Activated T-helper 1 cell treated with anti-CD3 and anti-CD28 coated beads, Interleukin-12 subunit alpha, Interleukin-12 subunit beta, Interleukin-2, Interleukin-4 antibody, amounts not matched to agents 30 ng/mL and 10 ng/mL and 1 ng/mL, durations not matched to agents 14 hours and 24 hours and 36 hours (primary cell): ENCODE measurements at regions of chr17 and their contacts with region 1.

Region 1: DNA sequence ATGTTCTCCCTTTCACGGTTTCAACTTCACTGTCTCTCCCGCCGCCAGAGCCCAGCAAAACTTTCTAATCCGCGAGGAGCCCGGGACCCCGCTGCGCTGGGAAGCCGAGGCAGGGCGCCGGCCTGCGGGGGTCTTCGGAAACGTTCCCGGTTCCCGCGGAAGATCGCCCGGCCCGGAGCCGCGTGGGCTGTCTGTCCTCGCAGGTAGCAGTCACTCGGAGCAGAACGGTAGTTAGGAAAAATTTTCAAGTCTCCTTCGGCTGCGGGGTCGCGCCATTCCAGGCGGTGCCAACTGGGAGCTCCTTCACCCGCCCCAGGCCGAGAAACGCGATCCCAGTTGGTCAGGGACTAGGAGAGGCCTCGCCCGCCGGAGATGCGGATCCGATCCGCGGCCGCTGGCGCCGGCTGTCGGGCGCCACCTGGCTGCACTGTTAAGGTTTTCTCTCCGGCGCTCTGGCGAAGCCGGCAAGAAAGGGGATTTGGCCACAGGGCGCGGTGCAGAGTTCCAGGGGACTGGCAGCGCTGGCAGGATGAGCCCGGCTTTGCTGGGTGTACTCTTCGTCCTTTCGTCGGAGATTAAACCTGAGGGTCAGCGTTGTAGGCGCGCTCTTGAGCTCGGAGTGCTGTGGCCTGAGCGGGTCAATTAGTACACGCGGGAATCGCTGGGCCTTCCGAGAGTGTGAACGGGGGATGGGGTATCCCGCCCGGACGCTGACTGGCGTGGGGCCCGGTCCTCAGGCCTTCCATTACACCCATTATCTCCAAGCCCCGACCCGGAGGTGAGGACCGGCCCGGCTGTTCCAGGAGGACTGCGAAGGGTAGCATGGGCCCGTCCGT is 135.4 kb downstream of the KCNJ12 start:
- DNase-seq: peak; percentile 37
- H3K4me3 Mint-ChIP-seq: peak overlapping the region; percentile 70
- H3K27ac Mint-ChIP-seq: no peak overlapping the region
- H3K4me1 Mint-ChIP-seq: peaks cover 18% of the 10 kb centered on the region
- H3K27me3 Mint-ChIP-seq: peaks cover 66% of the 10 kb centered on the region

Region 2: DNA sequence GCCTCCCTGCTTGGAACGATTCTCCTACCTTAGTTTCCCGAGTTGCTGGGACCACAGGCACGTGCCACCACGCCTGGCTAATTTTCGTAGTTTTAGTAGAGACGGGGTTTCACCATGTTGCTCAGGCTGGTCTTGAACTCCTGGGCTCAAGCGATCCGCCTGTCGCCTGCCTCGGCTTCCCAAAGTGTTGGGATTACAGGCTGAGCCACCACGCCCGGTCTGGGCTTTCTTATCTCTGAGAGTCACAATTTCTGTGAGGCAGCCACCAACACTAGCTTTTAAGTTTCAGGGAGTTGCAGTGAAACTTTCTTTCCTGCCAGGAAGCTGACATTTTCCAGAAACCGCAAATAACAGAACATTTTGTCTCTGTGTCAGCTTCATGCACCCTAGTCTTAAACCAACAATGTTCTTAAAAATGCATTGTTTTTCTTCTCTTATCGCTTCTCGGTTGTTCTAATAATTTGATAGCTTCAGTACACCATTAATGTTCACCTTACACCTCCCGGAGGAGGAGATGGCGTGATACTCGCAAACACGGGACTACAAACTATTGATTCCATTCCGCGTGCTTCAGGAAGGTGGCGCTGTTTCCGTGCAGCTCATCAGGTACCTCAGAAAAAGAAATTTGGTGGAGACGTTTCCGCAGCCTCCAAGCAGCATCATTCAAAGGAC is 392.2 kb before region 1 on chr17:
- intact Hi-C with region 1: loop called (anchors 1 kb)
- DNase-seq: peak; percentile 53
- H3K4me3 Mint-ChIP-seq: no peak overlapping the region
- H3K27ac Mint-ChIP-seq: no peak overlapping the region
- H3K4me1 Mint-ChIP-seq: peaks cover 12% of the 10 kb centered on the region
- H3K27me3 Mint-ChIP-seq: peaks cover 12% of the 10 kb centered on the region

Region 3: GRCh38 chr17:21275579-21276263 is 235.9 kb before region 1 on chr17:
- intact Hi-C with region 1: loop called (anchors 1 kb)
- DNase-seq: peak; percentile 92
- H3K4me3 Mint-ChIP-seq: peak overlapping the region; percentile 95
- H3K27ac Mint-ChIP-seq: peak overlapping the region; percentile 63
- H3K4me1 Mint-ChIP-seq: peaks cover 43% of the 10 kb centered on the region
- H3K27me3 Mint-ChIP-seq: peaks cover 3% of the 10 kb centered on the region

Region 4: GRCh38 chr17:21318439-21318838 is 193.1 kb before region 1 on chr17:
- intact Hi-C with region 1: loop called (anchors 5 kb)
- DNase-seq: no peak
- H3K4me3 Mint-ChIP-seq: no peak overlapping the region
- H3K27ac Mint-ChIP-seq: no peak overlapping the region
- H3K4me1 Mint-ChIP-seq: no peaks in the 10 kb centered on the region
- H3K27me3 Mint-ChIP-seq: peaks cover 3% of the 10 kb centered on the region

Region 5: GRCh38 chr17:21376759-21377690 is 134.6 kb before region 1 on chr17:
- intact Hi-C with region 1: loop called (anchors 5 kb)
- DNase-seq: no peak
- H3K4me3 Mint-ChIP-seq: no peak overlapping the region
- H3K27ac Mint-ChIP-seq: no peak overlapping the region
- H3K4me1 Mint-ChIP-seq: no peaks in the 10 kb centered on the region
- H3K27me3 Mint-ChIP-seq: peaks cover 28% of the 10 kb centered on the region

Region 6: GRCh38 chr17:21457051-21458026 is 54.2 kb before region 1 on chr17:
- intact Hi-C with region 1: loop called (anchors 1 kb)
- DNase-seq: peak; percentile 85
- H3K4me3 Mint-ChIP-seq: no peak overlapping the region
- H3K27ac Mint-ChIP-seq: peak overlapping the region; percentile 64
- H3K4me1 Mint-ChIP-seq: peaks cover 10% of the 10 kb centered on the region
- H3K27me3 Mint-ChIP-seq: peaks cover 25% of the 10 kb centered on the region

Region 7: GRCh38 chr17:21495281-21495680 is 16.3 kb before region 1 on chr17:
- intact Hi-C with region 1: no loop called
- DNase-seq: no peak
- H3K4me3 Mint-ChIP-seq: no peak overlapping the region
- H3K27ac Mint-ChIP-seq: no peak overlapping the region
- H3K4me1 Mint-ChIP-seq: no peaks in the 10 kb centered on the region
- H3K27me3 Mint-ChIP-seq: peaks cover 8% of the 10 kb centered on the region